MCF 10A (cell line): ENCODE measurements at regions of chr14 and their contacts with region 1.

Region 1: GRCh38 chr14:31992011-31992447 is 85.1 kb upstream of the ARHGAP5 start:
- DNase-seq: peak; percentile 90
- H3K4me3 Mint-ChIP-seq: no peak overlapping the region
- H3K27ac Mint-ChIP-seq: peak overlapping the region; percentile 54
- H3K4me1 Mint-ChIP-seq: peaks cover 62% of the 10 kb centered on the region
- H3K27me3 Mint-ChIP-seq: no peaks in the 10 kb centered on the region
- CTCF ChIP-seq: no peak

Region 2: DNA sequence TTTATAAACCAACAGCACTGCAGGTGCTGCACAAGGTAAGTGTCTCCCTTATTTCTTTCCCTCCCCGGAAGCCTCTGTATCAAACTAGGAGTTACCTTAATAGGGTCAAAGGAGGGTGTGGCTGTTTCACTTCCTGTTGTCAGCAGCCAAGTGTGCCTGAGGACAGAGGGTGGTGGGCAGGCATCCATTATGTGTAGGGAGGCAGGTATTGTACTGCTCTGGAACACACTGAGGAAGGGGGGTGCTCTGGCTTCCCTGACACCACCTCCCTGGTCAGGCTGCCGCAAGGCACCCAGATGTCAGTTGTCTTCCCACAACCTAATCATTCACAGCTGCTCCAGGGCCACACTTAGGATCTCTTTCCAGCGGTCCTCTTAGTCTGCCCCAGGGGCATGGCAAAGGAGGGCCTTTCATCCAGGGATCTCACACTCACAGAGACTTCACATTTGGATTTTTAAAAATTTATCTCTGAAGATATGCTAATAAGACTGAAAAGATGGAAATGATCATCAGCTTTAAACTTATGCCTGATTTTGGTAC is 46.9 kb before region 1 on chr14:
- CTCF ChIA-PET with region 1: no interaction called
- POLR2A ChIA-PET with region 1: interaction called, 17 read pairs
- intact Hi-C with region 1: loop called (anchors 10 kb)
- DNase-seq: no peak
- H3K4me3 Mint-ChIP-seq: no peak overlapping the region
- H3K27ac Mint-ChIP-seq: peak overlapping the region; percentile 20
- H3K4me1 Mint-ChIP-seq: peaks cover 41% of the 10 kb centered on the region
- H3K27me3 Mint-ChIP-seq: no peaks in the 10 kb centered on the region
- CTCF ChIP-seq: no peak

Region 3: GRCh38 chr14:31950764-31951637 is 41.0 kb before region 1 on chr14:
- CTCF ChIA-PET with region 1: interaction called, 4 read pairs
- POLR2A ChIA-PET with region 1: interaction called, 17 read pairs
- intact Hi-C with region 1: loop called (anchors 10 kb)
- DNase-seq: peak; percentile 67
- H3K4me3 Mint-ChIP-seq: no peak overlapping the region
- H3K27ac Mint-ChIP-seq: peak overlapping the region; percentile 37
- H3K4me1 Mint-ChIP-seq: peaks cover 45% of the 10 kb centered on the region
- H3K27me3 Mint-ChIP-seq: no peaks in the 10 kb centered on the region
- CTCF ChIP-seq: no peak

Region 4: DNA sequence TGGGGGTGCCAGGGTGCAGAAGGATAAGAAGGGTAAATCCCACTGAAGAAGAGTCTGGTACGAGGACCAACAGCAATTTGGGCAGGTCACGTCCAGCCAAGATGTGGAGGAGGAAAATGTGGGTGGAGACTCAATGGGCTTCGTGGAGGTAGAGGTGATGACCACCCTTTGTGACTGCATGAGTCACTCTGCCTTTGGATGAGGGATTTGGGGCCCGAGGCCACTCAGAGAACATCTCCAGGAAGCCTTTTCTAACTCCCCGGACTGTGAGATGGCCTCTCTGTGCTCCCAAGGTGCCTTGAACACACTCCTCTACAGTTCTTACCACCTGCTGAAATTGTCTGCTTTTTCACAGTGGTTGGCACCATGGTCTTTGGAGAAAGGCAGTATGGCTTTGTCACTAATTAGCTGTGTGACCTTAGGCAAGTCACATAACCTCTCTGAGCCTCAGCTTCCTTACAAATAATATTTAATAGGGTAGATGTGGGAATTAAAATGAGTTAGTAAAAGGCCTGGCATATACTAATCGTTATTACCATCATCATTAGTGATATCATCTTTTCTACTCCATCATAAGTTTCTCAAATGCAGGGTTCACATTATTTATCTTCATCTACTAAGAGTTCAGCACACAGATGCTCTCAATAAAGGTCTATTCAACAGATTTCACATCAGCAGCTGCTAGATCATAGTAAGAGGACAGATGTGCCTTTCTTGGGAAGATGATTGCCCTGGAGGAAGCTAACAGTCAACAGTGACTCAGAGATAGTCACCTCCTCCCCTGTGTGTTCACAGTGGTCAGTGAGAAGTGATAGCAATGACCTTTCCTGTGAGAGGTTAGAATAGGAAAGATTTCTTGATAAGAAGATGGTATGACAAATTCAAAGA is 18.2 kb after region 1 on chr14:
- CTCF ChIA-PET with region 1: interaction called, 8 read pairs
- POLR2A ChIA-PET with region 1: interaction called, 17 read pairs
- intact Hi-C with region 1: no loop called
- DNase-seq: peak; percentile 71
- H3K4me3 Mint-ChIP-seq: no peak overlapping the region
- H3K27ac Mint-ChIP-seq: peak overlapping the region; percentile 62
- H3K4me1 Mint-ChIP-seq: peaks cover 38% of the 10 kb centered on the region
- H3K27me3 Mint-ChIP-seq: no peaks in the 10 kb centered on the region
- CTCF ChIP-seq: no peak

Region 5: DNA sequence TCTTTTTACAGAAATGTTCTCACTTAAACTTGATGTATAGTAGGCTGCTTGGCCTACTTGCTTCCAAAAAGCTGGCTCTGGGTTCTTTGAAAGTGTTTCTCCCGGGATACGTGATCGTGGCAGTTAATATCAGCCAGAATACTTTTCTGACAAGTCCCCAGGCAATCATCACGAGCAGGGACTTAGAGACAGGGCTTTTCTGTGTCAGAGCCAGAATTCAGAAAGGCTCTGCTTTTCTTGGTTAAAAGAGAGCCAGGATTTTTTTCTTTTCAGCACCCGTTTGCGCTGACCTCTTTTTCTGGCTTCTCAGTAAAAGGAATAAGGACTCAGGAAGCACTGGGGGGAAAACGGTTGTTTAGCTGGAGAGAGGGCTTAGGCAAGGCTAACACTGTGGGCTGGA is 27.2 kb after region 1 on chr14:
- CTCF ChIA-PET with region 1: interaction called, 4 read pairs
- POLR2A ChIA-PET with region 1: interaction called, 21 read pairs
- intact Hi-C with region 1: no loop called
- DNase-seq: no peak
- H3K4me3 Mint-ChIP-seq: no peak overlapping the region
- H3K27ac Mint-ChIP-seq: peak overlapping the region; percentile 31
- H3K4me1 Mint-ChIP-seq: peaks cover 21% of the 10 kb centered on the region
- H3K27me3 Mint-ChIP-seq: no peaks in the 10 kb centered on the region
- CTCF ChIP-seq: no peak

Region 6: DNA sequence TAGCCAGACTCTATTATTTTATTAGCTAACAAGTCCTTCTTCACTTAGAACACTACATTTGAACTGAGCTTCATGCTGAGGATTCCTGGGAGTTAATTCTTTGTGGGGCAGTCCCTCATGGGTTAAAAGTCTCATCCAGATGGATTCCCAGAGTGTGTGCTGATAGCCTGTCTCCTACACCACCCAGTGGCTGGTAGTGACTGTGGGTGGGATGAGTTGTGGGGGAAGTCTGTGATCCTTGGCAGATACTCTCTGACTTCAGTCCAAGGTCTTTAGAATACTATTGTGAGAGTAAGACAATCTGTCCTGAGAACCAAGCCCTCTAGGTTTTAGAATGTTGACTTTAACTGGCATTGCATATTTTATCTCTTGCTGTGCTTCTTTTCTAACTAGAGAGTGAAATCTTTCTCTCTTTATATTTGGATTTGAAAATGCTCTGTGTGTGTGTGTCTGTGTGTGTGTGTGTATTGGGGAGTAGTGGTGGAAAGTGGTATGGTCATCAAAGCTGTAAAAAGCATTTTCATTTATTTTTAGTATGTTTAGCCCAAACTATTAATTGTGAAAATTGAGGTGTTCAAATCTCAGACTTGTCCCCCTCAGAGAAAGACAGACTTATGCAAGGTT is 374.3 kb after region 1 on chr14:
- CTCF ChIA-PET with region 1: no interaction called
- POLR2A ChIA-PET with region 1: no interaction called
- intact Hi-C with region 1: no loop called
- DNase-seq: no peak
- H3K4me3 Mint-ChIP-seq: no peak overlapping the region
- H3K27ac Mint-ChIP-seq: no peak overlapping the region
- H3K4me1 Mint-ChIP-seq: peaks cover 27% of the 10 kb centered on the region
- H3K27me3 Mint-ChIP-seq: no peaks in the 10 kb centered on the region
- CTCF ChIP-seq: no peak